ENCODE measurements at regions of chr2 and their contacts with region 1.

Region 1: GRCh38 chr2:72759755-72760154 is 66.1 kb downstream of the EXOC6B start:
- DNase-seq: no peak
- ATAC-seq: no peak
- H3K4me3 ChIP-seq: no peak overlapping the region
- H3K27ac ChIP-seq: no peak overlapping the region
- H3K4me1 ChIP-seq: peaks cover 0 to 7% of the 10 kb centered on the region in 2 donors
- H3K27me3 ChIP-seq: no peaks in the 10 kb centered on the region
- CTCF ChIP-seq: no peak
- POLR2A ChIP-seq: no peak

Region 2: DNA sequence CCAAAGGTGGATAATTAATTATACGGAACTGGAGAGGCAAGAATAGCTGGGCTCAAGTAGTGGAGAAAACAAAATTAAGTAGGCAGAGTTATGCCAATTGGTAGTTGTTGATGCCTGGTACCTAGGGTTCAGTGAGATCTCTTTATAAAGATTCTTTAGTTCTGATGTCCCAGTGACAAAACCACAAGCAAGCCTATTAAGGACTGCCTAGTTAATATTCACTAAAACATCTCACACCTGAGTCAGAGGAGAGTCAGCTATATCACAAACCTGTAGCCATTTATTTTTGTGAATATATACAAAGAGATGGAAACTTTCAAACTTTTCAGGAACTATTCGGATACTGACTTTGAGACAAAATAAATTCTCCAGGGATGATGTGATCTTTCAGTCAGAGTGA is 398.2 kb before region 1 on chr2:
- in situ Hi-C with region 1: no loop called
- intact Hi-C with region 1: no loop called
- DNase-seq: no peak
- ATAC-seq: no peak
- H3K4me3 ChIP-seq: no peak overlapping the region
- H3K27ac ChIP-seq: no peak overlapping the region
- H3K4me1 ChIP-seq: no peaks in the 10 kb centered on the region
- H3K27me3 ChIP-seq: no peaks in the 10 kb centered on the region
- CTCF ChIP-seq: no peak
- POLR2A ChIP-seq: no peak

Region 3: GRCh38 chr2:72862239-72862988 is 102.7 kb after region 1 on chr2:
- in situ Hi-C with region 1: loop called in 1 of 4 experiments (anchors 5 kb)
- intact Hi-C with region 1: no loop called
- DNase-seq: peak; percentile 62 to 78
- ATAC-seq: peak; percentile 96 to 99
- H3K4me3 ChIP-seq: peak overlapping the region in 3 of 4 donors; percentile 20 to 37 (median 29)
- H3K27ac ChIP-seq: no peak overlapping the region
- H3K4me1 ChIP-seq: peaks cover 0 to 8% of the 10 kb centered on the region in 2 donors
- H3K27me3 ChIP-seq: peaks cover 4 to 11% (median 8%) of the 10 kb centered on the region in 3 donors
- CTCF ChIP-seq: peak; percentile 81 to 99 (median 88)
- POLR2A ChIP-seq: no peak